GM10248 (cell line): ENCODE measurements at regions of chr7 and their contacts with region 1.

Region 1: GRCh38 chr7:143394790-143395602 is 13.7 kb downstream of the EPHA1 start:
- DNase-seq: no peak
- CTCF ChIP-seq: no peak

Region 2: DNA sequence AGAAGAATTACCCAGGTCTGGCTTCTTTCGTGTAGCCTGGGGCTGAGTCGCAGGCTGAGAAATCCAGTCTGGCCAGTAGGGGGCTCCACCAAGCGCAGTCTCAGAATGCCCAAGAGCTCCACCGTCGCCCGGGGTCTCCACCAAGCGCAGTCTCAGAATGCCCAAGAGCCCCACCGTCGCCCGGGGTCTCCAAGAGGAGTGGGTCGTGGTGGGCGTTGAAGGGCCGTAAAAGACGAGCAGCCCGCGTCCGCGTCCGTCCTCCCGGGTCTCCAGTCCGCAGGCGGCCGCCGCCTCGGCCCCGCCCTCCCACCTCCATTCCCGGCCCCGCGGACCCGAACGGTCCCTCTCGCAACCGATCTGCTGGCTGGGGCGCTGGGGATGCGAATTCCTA is 14.7 kb before region 1 on chr7:
- CTCF ChIA-PET with region 1: interaction called, 15 read pairs
- POLR2A ChIA-PET with region 1: no interaction called
- DNase-seq: peak; percentile 82
- CTCF ChIP-seq: peak; percentile 89

Region 3: DNA sequence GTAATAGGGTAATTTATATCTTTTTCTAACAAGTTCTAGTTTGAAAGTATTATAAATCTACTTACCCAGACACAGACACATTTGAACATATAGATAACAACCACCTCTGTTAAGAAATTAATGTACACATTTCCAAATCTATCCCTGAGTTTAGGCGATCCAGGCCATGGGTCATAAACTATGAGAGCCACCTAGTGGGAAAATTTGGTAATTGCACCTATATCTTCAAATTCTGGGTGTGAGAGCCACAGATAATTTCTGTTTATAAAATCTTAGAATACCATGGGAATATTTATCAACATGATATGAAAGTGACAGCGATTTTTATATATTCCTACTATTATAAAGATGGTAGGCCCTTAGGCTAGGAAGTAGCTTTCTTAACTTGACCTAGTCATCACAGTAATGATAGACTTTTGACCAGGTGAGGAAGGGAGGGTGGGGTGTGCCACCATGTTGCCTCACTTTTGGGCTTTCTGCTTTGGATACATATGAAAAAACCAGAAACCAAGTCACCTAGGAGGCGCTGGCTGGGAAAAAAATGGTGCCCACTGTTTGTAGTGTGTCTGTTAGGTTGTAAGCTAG is 21.7 kb after region 1 on chr7:
- CTCF ChIA-PET with region 1: interaction called, 26 read pairs
- POLR2A ChIA-PET with region 1: no interaction called
- DNase-seq: peak; percentile 66
- CTCF ChIP-seq: peak; percentile 67